Naive thymus-derived CD4-positive, alpha-beta T cell (primary cell): ENCODE measurements at regions of chr19 and their contacts with region 1.

Region 1: DNA sequence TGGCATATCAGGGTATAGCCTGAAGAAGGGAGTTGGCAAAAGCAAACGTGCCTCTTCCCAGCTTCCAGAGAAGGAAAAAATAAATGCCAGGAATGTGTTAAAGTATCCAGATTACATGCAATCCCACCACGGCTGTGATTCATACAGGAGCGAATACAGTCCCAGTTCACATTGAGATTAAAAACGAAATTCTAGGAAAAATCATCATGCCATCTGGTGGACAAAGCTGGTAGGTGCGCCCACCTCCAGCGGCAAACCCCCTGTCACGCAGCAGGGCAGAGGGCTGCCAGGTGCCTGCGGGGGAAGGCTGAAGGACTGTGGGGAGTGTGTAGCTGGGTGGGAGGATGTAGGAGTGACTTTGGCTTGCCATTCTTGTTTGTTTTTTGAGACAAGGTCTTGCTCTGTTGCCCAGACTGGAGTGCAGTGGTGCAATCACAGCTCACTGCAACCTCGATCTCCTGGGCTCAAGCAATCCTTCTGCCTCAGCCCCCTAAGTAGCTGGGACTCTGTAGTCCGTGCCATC is 6.4 kb upstream of the DMWD start:
- DNase-seq: peak; percentile 31 to 64 (median 56)
- ATAC-seq: peak; percentile 95
- H3K4me3 ChIP-seq: no peak overlapping the region
- H3K4me3 Mint-ChIP-seq: no peak overlapping the region
- H3K27ac ChIP-seq: no peak overlapping the region
- H3K27ac Mint-ChIP-seq: peak overlapping the region in 1 of 9 donors; percentile 17
- H3K4me1 ChIP-seq: peaks cover 0 to 3% of the 10 kb centered on the region in 2 donors
- H3K4me1 Mint-ChIP-seq: peaks cover 0 to 13% (median 10%) of the 10 kb centered on the region in 7 donors
- H3K27me3 ChIP-seq: peaks cover 0 to 8% of the 10 kb centered on the region in 2 donors
- H3K27me3 Mint-ChIP-seq: peaks cover 19 to 72% (median 22%) of the 10 kb centered on the region in 5 donors

Region 2: DNA sequence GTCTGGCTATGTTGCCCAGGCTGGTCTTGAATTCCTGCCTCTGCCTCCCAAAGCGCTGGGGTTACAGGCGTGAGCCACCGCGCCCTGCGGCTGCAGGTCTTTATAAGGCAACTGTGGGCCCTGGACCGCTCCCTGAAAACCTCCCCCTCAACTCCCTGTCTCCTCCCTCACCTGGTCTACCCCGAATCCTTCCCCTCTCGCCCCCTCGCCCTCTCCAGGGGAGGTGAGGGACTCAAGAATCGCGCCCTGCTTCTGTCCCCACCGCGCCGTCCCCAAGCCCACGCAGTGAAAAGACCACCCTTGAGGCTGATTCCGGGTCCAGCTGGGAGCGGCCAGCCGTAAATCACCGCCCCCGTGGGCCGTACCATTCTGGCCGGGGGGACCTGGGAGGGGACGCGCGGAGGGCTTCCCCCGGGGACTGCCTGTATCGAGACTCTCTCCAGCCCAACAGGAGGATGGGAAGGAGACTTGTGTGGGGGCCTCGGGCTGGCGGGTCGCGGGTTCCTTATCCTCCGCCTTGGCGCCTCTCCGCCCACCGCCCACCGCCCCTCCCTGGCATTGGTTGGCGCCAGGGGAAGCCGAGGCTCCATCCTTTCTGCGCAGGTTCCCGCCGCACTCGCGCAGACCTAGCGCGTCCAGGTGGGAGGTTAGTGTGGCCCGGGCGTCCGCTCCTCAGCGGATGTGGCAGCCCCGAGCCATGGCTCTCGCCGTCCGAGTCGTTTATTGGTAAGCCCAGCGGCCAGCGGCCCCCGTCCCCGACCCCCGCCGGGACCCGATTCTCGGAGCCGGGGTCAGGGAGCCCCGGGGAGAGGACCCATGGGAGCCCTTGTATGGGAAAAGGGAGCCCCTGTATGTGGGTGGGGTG is 1979.3 kb after region 1 on chr19 and contains the start of gene SELENOW:
- CTCF ChIA-PET with region 1: interaction called, 11 read pairs
- POLR2A ChIA-PET with region 1: no interaction called
- intact Hi-C with region 1: no loop called
- DNase-seq: peak; percentile 56 to 86 (median 76)
- ATAC-seq: peak; percentile 95
- H3K4me3 ChIP-seq: peak within 1 kb of the TSS; percentile 88
- H3K4me3 Mint-ChIP-seq: peak within 1 kb of the TSS; percentile 84 to 99 (median 93)
- H3K27ac ChIP-seq: peak within 1 kb of the TSS; percentile 87
- H3K27ac Mint-ChIP-seq: peak within 1 kb of the TSS; percentile 70 to 96 (median 91)
- H3K4me1 ChIP-seq: peaks cover 8 to 19% of the 10 kb centered on the region in 2 donors
- H3K4me1 Mint-ChIP-seq: peaks cover 8 to 40% (median 32%) of the 10 kb centered on the region in 7 donors
- H3K27me3 ChIP-seq: no peaks in the 10 kb centered on the region
- H3K27me3 Mint-ChIP-seq: no peaks in the 10 kb centered on the region
- total RNA-seq, gene SELENOW: 67.5 to 116 (median 101) TPM